ENCODE measurements at regions of chr2 and their contacts with region 1.

Region 1: DNA sequence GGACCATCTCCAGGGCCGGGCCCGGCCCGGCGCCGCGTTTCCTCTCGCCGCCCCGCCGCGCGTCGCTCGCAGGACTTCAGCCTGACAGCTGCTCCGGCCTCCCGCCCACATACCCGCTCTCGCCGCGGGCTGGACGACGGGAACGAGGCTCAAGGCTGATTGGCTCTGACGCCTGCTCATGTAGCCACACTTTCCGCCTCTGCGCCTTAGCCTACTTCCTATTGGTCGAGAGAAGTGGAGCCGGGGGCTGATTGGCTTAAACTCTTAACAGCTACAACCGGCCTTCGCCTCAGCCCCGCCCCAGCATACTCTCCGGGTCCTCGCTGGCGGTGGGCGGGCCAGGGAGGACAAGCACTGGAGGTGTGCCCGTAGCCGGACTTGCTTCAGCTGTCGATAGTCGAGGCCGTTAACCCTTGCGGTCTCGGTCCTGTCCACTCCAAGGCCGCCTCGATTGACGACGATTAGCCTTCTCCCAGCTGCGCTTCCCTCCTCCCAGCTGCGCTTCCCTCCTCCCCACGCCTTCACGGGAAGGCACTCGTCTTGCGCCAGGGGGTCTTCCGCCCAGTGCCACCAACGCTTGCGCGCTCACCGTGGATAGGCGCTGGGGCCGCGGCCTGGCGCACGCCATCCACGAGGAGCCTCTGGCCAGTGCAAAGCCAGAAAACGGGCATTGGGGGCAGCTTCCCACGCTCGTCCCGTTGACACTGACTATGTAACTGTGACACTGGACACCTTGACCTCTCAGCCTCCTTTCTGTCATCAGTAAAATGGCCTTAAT is at the start of gene PRADC1:
- DNase-seq: peak; percentile 84
- ATAC-seq: peak; percentile 87
- H3K4me3 Mint-ChIP-seq: peak within 1 kb of the TSS; percentile 95
- H3K27ac Mint-ChIP-seq: peak within 1 kb of the TSS; percentile 93
- H3K4me1 Mint-ChIP-seq: peaks cover 38% of the 10 kb centered on the region
- H3K27me3 Mint-ChIP-seq: no peaks in the 10 kb centered on the region
- CTCF ChIP-seq: no peak
- total RNA-seq, gene PRADC1: 4.6 and 4.7 TPM in 2 replicates

Region 2: GRCh38 chr2:71331581-71332434 is 1901.5 kb before region 1 on chr2 and contains the start of gene ZNF638:
- CTCF ChIA-PET with region 1: no interaction called
- POLR2A ChIA-PET with region 1: no interaction called
- intact Hi-C with region 1: loop called (anchors 5 kb)
- DNase-seq: peak; percentile 86
- ATAC-seq: peak; percentile 99
- H3K4me3 Mint-ChIP-seq: peak within 1 kb of the TSS; percentile 100
- H3K27ac Mint-ChIP-seq: peak within 1 kb of the TSS; percentile 100
- H3K4me1 Mint-ChIP-seq: peaks cover 42% of the 10 kb centered on the region
- H3K27me3 Mint-ChIP-seq: no peaks in the 10 kb centered on the region
- CTCF ChIP-seq: no peak
- total RNA-seq, gene ZNF638: 125 and 152 TPM in 2 replicates

Region 3: DNA sequence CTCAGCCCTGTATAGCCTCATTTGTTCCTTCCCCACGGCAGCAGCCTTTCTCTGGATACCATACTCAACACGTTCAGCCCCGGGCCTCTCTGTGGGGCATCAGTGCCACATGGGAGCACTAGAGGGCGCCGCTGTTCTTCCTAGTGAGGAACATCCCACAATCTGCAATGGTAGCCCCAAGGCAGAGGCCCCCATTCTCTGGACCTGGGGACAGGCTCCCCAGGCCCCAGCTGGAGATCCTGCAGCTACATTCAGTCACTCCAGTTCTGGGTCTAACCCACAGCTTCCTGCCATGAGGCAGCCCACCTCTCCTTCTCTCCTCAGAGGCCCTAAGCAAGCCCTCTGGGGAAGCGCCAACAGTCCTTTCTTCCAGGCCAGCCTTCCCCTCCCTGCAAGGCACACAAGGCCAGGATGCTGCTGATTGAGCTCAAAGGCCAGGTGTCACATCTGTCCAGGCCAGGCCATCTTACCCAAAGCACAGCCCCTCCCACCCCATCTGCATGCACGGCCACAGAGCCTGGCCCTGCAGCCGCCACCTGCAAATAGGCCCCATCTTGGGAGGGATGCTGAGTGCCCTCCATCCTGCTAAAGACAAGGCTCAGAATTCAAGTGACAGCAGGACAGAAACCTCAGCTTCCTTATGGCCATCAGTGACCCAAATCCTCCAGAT is 147.5 kb before region 1 on chr2:
- CTCF ChIA-PET with region 1: no interaction called
- POLR2A ChIA-PET with region 1: no interaction called
- intact Hi-C with region 1: no loop called
- DNase-seq: peak; percentile 62
- ATAC-seq: peak; percentile 96
- H3K4me3 Mint-ChIP-seq: no peak overlapping the region
- H3K27ac Mint-ChIP-seq: no peak overlapping the region
- H3K4me1 Mint-ChIP-seq: no peaks in the 10 kb centered on the region
- H3K27me3 Mint-ChIP-seq: peaks cover 3% of the 10 kb centered on the region
- CTCF ChIP-seq: no peak

Region 4: DNA sequence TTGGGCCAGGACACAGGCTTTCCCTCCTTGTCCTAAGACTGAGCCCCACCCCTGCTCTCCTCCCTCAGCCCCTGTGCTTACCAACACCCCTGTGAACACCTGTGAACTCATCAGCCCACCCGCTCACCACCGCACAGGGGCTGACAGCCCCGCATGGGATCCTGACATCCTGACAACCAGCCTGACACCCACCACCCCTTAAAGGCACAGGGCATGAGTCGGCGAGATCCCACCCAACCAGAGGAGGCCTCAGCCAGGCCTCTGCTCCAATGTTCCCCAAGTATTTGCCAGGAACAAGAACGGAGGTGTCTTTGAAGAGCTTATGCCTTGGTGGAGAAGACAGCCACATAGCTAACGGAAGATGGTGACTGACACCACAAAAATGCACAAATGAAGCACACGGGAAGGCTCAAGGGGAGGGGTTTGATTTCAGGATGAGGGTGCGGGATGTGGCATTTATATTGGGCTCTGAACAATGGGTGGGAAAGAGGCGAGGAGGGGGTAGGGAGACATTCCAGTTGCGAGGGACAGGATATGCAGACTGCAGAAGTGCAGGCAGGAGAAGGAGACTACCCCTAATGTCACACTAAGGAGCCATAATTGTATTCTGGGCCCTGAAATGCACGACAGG is 131.6 kb before region 1 on chr2:
- CTCF ChIA-PET with region 1: no interaction called
- POLR2A ChIA-PET with region 1: no interaction called
- intact Hi-C with region 1: no loop called
- DNase-seq: no peak
- ATAC-seq: no peak
- H3K4me3 Mint-ChIP-seq: no peak overlapping the region
- H3K27ac Mint-ChIP-seq: no peak overlapping the region
- H3K4me1 Mint-ChIP-seq: no peaks in the 10 kb centered on the region
- H3K27me3 Mint-ChIP-seq: no peaks in the 10 kb centered on the region
- CTCF ChIP-seq: no peak

Region 5: DNA sequence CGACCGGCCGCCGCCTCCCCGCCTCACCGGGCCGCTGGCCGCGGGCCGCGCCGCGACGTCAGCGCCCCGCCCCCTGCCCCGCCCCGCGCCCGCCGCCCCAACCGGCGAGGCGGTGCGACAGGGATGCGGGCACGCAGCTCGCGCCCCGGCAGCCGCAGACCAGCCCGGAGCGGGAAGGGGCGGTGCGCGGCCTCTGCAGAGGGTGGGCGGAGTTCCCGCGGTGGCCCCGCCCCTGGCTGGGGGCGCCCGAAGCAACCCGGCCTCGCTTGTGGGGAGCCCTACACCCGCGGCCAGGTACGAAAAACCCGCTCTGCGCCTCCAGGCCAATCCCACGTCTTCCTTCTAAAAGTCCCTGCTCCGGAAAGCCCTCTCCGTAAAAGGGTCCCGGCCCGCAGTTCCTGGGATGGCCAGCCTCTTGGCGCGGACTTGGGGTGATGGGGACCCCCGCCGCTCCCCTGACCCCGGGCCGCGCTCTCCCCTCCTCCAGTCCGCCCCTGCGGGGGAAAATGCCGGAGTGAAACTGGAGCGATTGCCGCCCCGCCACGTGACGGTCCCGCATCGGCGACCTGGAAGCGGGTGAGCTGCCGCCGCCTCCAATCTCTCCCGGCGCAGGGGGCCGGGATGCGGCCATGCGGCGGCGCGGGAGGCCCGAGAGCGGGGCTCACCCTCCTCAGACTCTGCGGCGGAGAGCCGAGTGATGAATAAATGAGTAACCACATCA is 120.3 kb before region 1 on chr2 and contains the start of gene RAB11FIP5:
- CTCF ChIA-PET with region 1: no interaction called
- POLR2A ChIA-PET with region 1: no interaction called
- intact Hi-C with region 1: loop called (anchors 5 kb)
- DNase-seq: peak; percentile 75
- ATAC-seq: peak; percentile 91
- H3K4me3 Mint-ChIP-seq: peak within 1 kb of the TSS; percentile 77
- H3K27ac Mint-ChIP-seq: peak within 1 kb of the TSS; percentile 59
- H3K4me1 Mint-ChIP-seq: peaks cover 11% of the 10 kb centered on the region
- H3K27me3 Mint-ChIP-seq: no peaks in the 10 kb centered on the region
- CTCF ChIP-seq: no peak
- total RNA-seq, gene RAB11FIP5: 3.2 and 3.5 TPM in 2 replicates

Region 6: GRCh38 chr2:73268830-73269685 is 35.7 kb after region 1 on chr2:
- CTCF ChIA-PET with region 1: no interaction called
- POLR2A ChIA-PET with region 1: interaction called, 4 read pairs
- intact Hi-C with region 1: loop called (anchors 2 kb)
- DNase-seq: peak; percentile 54
- ATAC-seq: peak; percentile 92
- H3K4me3 Mint-ChIP-seq: peak overlapping the region; percentile 44
- H3K27ac Mint-ChIP-seq: no peak overlapping the region
- H3K4me1 Mint-ChIP-seq: peaks cover 18% of the 10 kb centered on the region
- H3K27me3 Mint-ChIP-seq: no peaks in the 10 kb centered on the region
- CTCF ChIP-seq: no peak

Region 7: GRCh38 chr2:73385595-73386341 is 152.4 kb after region 1 on chr2 and contains the start of gene ALMS1:
- CTCF ChIA-PET with region 1: interaction called, 4 read pairs
- POLR2A ChIA-PET with region 1: interaction called, 34 read pairs
- intact Hi-C with region 1: loop called (anchors 1 kb)
- DNase-seq: peak; percentile 85
- ATAC-seq: peak; percentile 85
- H3K4me3 Mint-ChIP-seq: peak within 1 kb of the TSS; percentile 90
- H3K27ac Mint-ChIP-seq: peak within 1 kb of the TSS; percentile 89
- H3K4me1 Mint-ChIP-seq: peaks cover 19% of the 10 kb centered on the region
- H3K27me3 Mint-ChIP-seq: peaks cover 3% of the 10 kb centered on the region
- CTCF ChIP-seq: no peak
- total RNA-seq, gene ALMS1: 17.8 and 20.1 TPM in 2 replicates

Region 8: GRCh38 chr2:74458132-74458925 is 1225.0 kb after region 1 on chr2 and contains the start of gene WBP1:
- CTCF ChIA-PET with region 1: no interaction called
- POLR2A ChIA-PET with region 1: interaction called, 3 read pairs
- intact Hi-C with region 1: loop called (anchors 2 kb)
- DNase-seq: peak; percentile 87
- ATAC-seq: peak; percentile 81
- H3K4me3 Mint-ChIP-seq: peak within 1 kb of the TSS; percentile 99
- H3K27ac Mint-ChIP-seq: peak within 1 kb of the TSS; percentile 100
- H3K4me1 Mint-ChIP-seq: peaks cover 62% of the 10 kb centered on the region
- H3K27me3 Mint-ChIP-seq: no peaks in the 10 kb centered on the region
- CTCF ChIP-seq: no peak
- total RNA-seq, gene WBP1: 61.4 and 65.3 TPM in 2 replicates